Activated T-helper 1 cell treated with anti-CD3 and anti-CD28 coated beads, Interleukin-12 subunit alpha, Interleukin-12 subunit beta, Interleukin-2, Interleukin-4 antibody, amounts not matched to agents 30 ng/mL and 10 ng/mL and 1 ng/mL, durations not matched to agents 14 hours and 24 hours and 36 hours (primary cell): ENCODE measurements at regions of chr7 and their contacts with region 1.

Region 1: GRCh38 chr7:17255926-17256325 is 42.5 kb upstream of the AHR start:
- DNase-seq: no peak
- H3K4me3 Mint-ChIP-seq: no peak overlapping the region
- H3K27ac Mint-ChIP-seq: no peak overlapping the region
- H3K4me1 Mint-ChIP-seq: peaks cover 12% of the 10 kb centered on the region
- H3K27me3 Mint-ChIP-seq: no peaks in the 10 kb centered on the region

Region 2: GRCh38 chr7:16918288-16918895 is 337.5 kb before region 1 on chr7:
- intact Hi-C with region 1: loop called (anchors 5 kb)
- DNase-seq: no peak
- H3K4me3 Mint-ChIP-seq: no peak overlapping the region
- H3K27ac Mint-ChIP-seq: no peak overlapping the region
- H3K4me1 Mint-ChIP-seq: peaks cover 8% of the 10 kb centered on the region
- H3K27me3 Mint-ChIP-seq: no peaks in the 10 kb centered on the region

Region 3: GRCh38 chr7:17139081-17139480 is 116.8 kb before region 1 on chr7:
- intact Hi-C with region 1: loop called (anchors 1 kb)
- DNase-seq: no peak
- H3K4me3 Mint-ChIP-seq: no peak overlapping the region
- H3K27ac Mint-ChIP-seq: peak overlapping the region; percentile 81
- H3K4me1 Mint-ChIP-seq: peaks cover 66% of the 10 kb centered on the region
- H3K27me3 Mint-ChIP-seq: no peaks in the 10 kb centered on the region

Region 4: GRCh38 chr7:17166824-17167379 is 89.0 kb before region 1 on chr7:
- intact Hi-C with region 1: loop called (anchors 1 kb)
- DNase-seq: no peak
- H3K4me3 Mint-ChIP-seq: no peak overlapping the region
- H3K27ac Mint-ChIP-seq: peak overlapping the region; percentile 6
- H3K4me1 Mint-ChIP-seq: peaks cover 34% of the 10 kb centered on the region
- H3K27me3 Mint-ChIP-seq: peaks cover 5% of the 10 kb centered on the region

Region 5: DNA sequence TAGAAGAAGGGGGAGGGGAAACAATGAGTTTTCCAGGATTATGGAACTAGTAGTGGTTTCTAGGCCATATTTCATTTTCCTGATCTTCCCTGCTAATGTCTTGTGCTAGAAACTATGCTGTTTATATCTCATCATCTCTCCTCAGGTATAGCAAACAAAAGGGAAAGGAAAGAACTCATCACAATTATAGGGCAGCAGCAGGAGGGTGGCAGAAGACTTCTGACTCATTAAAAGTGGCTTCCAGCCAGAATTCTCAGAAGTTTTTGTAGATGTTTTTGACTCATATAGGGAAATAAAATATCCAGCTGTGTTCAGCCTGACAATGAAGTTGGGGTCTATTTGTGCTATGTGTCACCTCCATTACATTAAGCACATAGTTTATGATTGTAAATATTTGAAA is 49.0 kb after region 1 on chr7:
- intact Hi-C with region 1: loop called (anchors 1 kb)
- DNase-seq: no peak
- H3K4me3 Mint-ChIP-seq: peak overlapping the region; percentile 11
- H3K27ac Mint-ChIP-seq: peak overlapping the region; percentile 26
- H3K4me1 Mint-ChIP-seq: peaks cover 18% of the 10 kb centered on the region
- H3K27me3 Mint-ChIP-seq: no peaks in the 10 kb centered on the region